Heart left ventricle (tissue), 16 donors: ENCODE measurements at regions of chr12 and their contacts with region 1.

Region 1: GRCh38 chr12:1282670-1283335 is 291.8 kb downstream of the ERC1 start:
- DNase-seq: peak in 4 of 5 donors; percentile 17 to 56 (median 28)
- ATAC-seq: peak; percentile 49 to 83 (median 73)
- H3K4me3 ChIP-seq: peak overlapping the region in 2 of 12 donors; percentile 19 to 26
- H3K27ac ChIP-seq: peak overlapping the region in 10 of 12 donors; percentile 16 to 76 (median 42)
- H3K4me1 ChIP-seq: peaks cover 0 to 18% (median 3%) of the 10 kb centered on the region in 12 donors
- H3K27me3 ChIP-seq: no peaks in the 10 kb centered on the region
- CTCF ChIP-seq: no peak
- POLR2A ChIP-seq: no peak

Region 2: DNA sequence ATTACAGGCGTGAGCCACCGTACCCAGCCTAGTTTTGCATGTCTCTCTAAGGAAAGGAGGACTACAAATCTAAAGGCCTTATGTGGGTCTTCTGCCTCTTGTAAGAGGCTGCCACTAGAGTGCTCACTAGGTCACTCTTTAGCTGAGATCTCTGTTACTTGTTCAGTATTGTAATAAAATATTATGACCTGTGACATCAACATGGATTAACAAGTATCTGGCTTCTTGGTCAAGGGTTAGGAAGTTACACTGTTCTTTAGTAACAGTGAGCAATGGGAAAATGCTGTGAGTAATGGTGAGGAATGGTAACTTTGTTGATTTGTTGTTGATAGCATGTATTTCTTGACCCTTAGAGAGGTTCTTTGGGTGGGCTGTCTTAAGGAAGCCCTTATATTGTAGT is 241.3 kb before region 1 on chr12:
- intact Hi-C with region 1: no loop called
- DNase-seq: no peak
- ATAC-seq: no peak
- H3K4me3 ChIP-seq: no peak overlapping the region
- H3K27ac ChIP-seq: no peak overlapping the region
- H3K4me1 ChIP-seq: peaks cover 0 to 11% (median 0%) of the 10 kb centered on the region in 12 donors
- H3K27me3 ChIP-seq: no peaks in the 10 kb centered on the region
- CTCF ChIP-seq: no peak
- POLR2A ChIP-seq: no peak

Region 3: GRCh38 chr12:1332327-1332726 is 49.5 kb after region 1 on chr12:
- intact Hi-C with region 1: loop called in 1 of 10 experiments (anchors 5 kb)
- DNase-seq: no peak
- ATAC-seq: no peak
- H3K4me3 ChIP-seq: no peak overlapping the region
- H3K27ac ChIP-seq: no peak overlapping the region
- H3K4me1 ChIP-seq: peaks cover 0 to 6% (median 0%) of the 10 kb centered on the region in 12 donors
- H3K27me3 ChIP-seq: no peaks in the 10 kb centered on the region
- CTCF ChIP-seq: no peak
- POLR2A ChIP-seq: no peak